Activated CD8-positive, alpha-beta memory T cell treated with anti-CD3 and anti-CD28 coated beads, Interleukin-2, amount 10 ng/mL, durations not matched to agents 7 days and 5 days (primary cell): ENCODE measurements at regions of chr17 and their contacts with region 1.

Region 1: DNA sequence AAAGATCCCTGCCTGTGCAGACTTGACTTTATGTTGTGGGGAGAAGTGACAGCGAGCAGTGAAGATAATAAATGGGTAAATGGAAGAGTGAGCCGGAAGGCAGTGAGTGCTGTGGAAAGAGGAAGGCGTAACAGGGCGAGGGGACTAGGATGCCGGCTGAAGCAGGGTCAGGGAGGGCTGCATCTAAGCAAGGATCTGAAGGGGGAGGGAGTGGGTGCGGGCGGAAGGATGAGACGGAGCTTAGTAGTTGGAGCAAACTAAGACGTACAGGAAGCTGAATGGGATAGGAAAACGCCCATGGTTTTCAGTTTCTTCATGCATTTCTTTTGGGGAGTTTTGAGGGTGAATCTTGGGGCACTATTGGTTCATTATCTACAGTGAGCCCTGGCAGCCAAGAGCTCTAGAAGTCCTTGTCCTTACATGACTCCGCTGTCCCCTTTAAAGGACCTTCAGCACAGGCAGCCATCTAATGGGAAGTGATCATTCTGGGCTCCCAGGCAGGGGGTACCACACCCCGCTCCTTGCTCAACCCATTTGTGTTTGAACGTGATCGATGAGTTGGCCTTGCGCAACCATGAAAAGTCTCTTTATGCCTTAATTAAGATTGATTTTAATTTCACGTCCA is 10.4 kb upstream of the NAT9 start:
- DNase-seq: no peak
- ATAC-seq: no peak
- H3K4me3 Mint-ChIP-seq: no peak overlapping the region
- H3K27ac Mint-ChIP-seq: peak overlapping the region; percentile 2
- H3K4me1 Mint-ChIP-seq: peaks cover 45% of the 10 kb centered on the region
- H3K27me3 Mint-ChIP-seq: no peaks in the 10 kb centered on the region

Region 2: DNA sequence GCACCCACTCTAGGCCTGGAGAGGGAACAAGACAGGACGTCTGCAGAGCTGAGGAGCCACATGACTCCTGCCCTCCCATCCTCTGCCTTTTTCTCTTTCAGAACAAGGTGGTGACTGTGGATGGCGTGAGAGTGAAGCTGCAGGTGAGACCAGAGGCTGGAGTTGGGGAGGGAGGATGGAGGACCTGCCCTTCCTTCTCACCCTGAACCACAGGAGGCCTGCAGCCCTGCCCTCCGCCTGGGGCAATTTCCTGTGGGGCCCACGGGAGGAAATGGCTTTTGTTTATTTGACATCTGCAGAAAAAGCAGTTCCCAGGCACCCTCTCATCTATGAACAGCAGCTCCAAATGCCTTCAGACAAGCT is 44.4 kb before region 1 on chr17:
- CTCF ChIA-PET with region 1: interaction called, 92 read pairs
- DNase-seq: peak; percentile 88
- ATAC-seq: peak; percentile 30
- H3K4me3 Mint-ChIP-seq: peak overlapping the region; percentile 43
- H3K27ac Mint-ChIP-seq: peak overlapping the region; percentile 91
- H3K4me1 Mint-ChIP-seq: peaks cover 84% of the 10 kb centered on the region
- H3K27me3 Mint-ChIP-seq: no peaks in the 10 kb centered on the region

Region 3: GRCh38 chr17:74759243-74759801 is 27.2 kb before region 1 on chr17:
- CTCF ChIA-PET with region 1: interaction called, 24 read pairs
- DNase-seq: peak; percentile 85
- ATAC-seq: peak; percentile 83
- H3K4me3 Mint-ChIP-seq: peak overlapping the region; percentile 67
- H3K27ac Mint-ChIP-seq: peak overlapping the region; percentile 88
- H3K4me1 Mint-ChIP-seq: peaks cover 70% of the 10 kb centered on the region
- H3K27me3 Mint-ChIP-seq: no peaks in the 10 kb centered on the region

Region 4: GRCh38 chr17:74833501-74834377 is 47.2 kb after region 1 on chr17:
- CTCF ChIA-PET with region 1: interaction called, 10 read pairs
- DNase-seq: no peak
- ATAC-seq: no peak
- H3K4me3 Mint-ChIP-seq: no peak overlapping the region
- H3K27ac Mint-ChIP-seq: no peak overlapping the region
- H3K4me1 Mint-ChIP-seq: no peaks in the 10 kb centered on the region
- H3K27me3 Mint-ChIP-seq: no peaks in the 10 kb centered on the region

Region 5: GRCh38 chr17:74873038-74873873 is 86.7 kb after region 1 on chr17:
- CTCF ChIA-PET with region 1: interaction called, 262 read pairs
- DNase-seq: peak; percentile 100
- ATAC-seq: peak; percentile 96
- H3K4me3 Mint-ChIP-seq: peak overlapping the region; percentile 89
- H3K27ac Mint-ChIP-seq: peak overlapping the region; percentile 89
- H3K4me1 Mint-ChIP-seq: peaks cover 36% of the 10 kb centered on the region
- H3K27me3 Mint-ChIP-seq: no peaks in the 10 kb centered on the region

Region 6: GRCh38 chr17:74893936-74894671 is 107.6 kb after region 1 on chr17:
- CTCF ChIA-PET with region 1: no interaction called
- DNase-seq: no peak
- ATAC-seq: no peak
- H3K4me3 Mint-ChIP-seq: no peak overlapping the region
- H3K27ac Mint-ChIP-seq: no peak overlapping the region
- H3K4me1 Mint-ChIP-seq: peaks cover 1% of the 10 kb centered on the region
- H3K27me3 Mint-ChIP-seq: peaks cover 58% of the 10 kb centered on the region